Calu3 (cell line): ENCODE measurements at regions of chr6 and their contacts with region 1.

Region 1: DNA sequence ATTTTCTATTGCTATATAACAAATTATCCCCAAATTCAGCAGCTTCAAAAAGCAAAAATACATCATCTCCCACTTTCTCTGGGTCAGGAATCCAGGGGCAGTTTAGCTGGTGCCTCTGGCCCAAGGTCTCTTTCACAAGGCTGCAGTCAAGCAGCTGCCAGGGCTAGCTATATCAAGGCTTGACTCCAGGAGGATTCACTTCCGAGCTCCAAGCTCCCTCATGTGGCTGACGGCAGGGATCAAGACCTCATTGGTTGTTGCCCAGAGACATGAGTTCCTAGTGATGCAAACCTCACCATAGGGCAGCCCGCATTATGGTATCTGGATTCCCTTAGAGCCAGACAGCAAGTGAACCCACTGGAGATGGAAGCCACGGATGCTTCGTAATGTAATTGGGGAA is 1.3 kb upstream of the VNN1 start:
- DNase-seq: peak; percentile 75
- H3K4me3 Mint-ChIP-seq: no peak overlapping the region
- H3K27ac Mint-ChIP-seq: peak overlapping the region; percentile 61
- H3K4me1 Mint-ChIP-seq: peaks cover 68% of the 10 kb centered on the region
- H3K27me3 Mint-ChIP-seq: no peaks in the 10 kb centered on the region
- CTCF ChIP-seq: peak; percentile 58

Region 2: DNA sequence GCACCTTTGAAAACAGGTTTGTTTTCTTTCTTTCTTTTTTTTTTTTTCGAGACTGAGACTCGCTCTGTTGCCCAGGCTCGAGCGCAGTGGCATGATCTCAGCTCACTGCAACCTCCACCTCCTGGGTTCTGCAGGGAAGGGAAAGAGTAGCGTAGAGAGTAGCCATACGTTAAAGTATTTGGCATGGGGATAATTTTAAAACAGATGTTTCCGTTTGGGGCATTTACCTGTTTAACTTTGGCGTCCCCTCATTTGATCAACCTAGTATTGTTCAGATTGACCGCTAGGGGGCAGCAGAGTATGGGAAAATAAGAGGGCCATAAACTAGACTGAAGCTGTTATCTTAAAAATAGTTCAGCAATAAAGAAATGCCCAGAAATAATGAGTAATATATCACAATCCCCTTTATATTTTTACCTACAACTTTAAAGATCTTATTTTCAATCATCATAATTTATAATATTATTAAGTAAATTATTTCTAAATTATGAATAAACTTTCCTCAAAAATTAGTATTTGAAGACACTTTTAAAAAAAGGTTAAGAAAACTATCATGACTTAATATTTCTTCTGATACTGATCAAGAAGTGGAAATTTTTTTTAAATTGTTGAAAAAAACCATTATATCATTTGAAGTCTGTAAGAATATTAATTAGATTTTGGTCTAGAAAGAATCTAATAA is 184.8 kb before region 1 on chr6:
- CTCF ChIA-PET with region 1: interaction called, 24 read pairs
- intact Hi-C with region 1: loop called (anchors 1 kb)
- DNase-seq: peak; percentile 76
- H3K4me3 Mint-ChIP-seq: peak overlapping the region; percentile 37
- H3K27ac Mint-ChIP-seq: peak overlapping the region; percentile 50
- H3K4me1 Mint-ChIP-seq: no peaks in the 10 kb centered on the region
- H3K27me3 Mint-ChIP-seq: no peaks in the 10 kb centered on the region
- CTCF ChIP-seq: peak; percentile 64

Region 3: DNA sequence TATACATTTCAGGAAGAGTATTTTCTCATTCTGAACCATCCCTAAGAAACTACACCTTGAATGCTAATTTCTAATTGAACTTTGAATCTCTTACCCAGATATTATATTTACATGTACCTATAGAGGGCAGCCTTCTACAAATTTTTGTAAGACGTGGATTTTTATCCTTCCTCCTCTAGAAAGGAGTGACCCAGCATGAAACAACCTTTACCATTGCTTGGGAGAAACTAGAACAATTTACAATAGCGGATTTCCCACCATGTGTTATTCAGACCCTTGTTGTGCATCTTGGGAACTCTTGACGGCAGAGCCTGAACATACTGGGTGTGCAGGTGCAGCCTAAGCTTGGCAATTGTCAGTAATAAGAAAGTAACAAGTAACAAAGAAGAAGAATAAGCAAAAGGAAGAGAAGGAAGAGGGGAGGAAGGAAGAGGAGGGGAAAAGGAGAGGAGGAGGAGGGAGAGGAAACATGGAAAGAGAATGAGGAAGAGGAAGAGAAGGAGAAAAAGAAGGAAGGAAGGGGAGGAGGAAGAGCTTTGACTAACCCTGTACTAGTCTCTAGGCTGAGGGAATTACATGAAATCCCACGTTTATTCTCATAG is 45.4 kb before region 1 on chr6:
- CTCF ChIA-PET with region 1: interaction called, 13 read pairs
- intact Hi-C with region 1: loop called (anchors 1 kb)
- DNase-seq: no peak
- H3K4me3 Mint-ChIP-seq: no peak overlapping the region
- H3K27ac Mint-ChIP-seq: peak overlapping the region; percentile 59
- H3K4me1 Mint-ChIP-seq: peaks cover 54% of the 10 kb centered on the region
- H3K27me3 Mint-ChIP-seq: no peaks in the 10 kb centered on the region
- CTCF ChIP-seq: peak; percentile 30

Region 4: GRCh38 chr6:132687306-132687705 is 27.9 kb before region 1 on chr6:
- CTCF ChIA-PET with region 1: interaction called, 10 read pairs
- intact Hi-C with region 1: loop called (anchors 2 kb)
- DNase-seq: peak; percentile 28
- H3K4me3 Mint-ChIP-seq: peak overlapping the region; percentile 53
- H3K27ac Mint-ChIP-seq: peak overlapping the region; percentile 96
- H3K4me1 Mint-ChIP-seq: peaks cover 53% of the 10 kb centered on the region
- H3K27me3 Mint-ChIP-seq: no peaks in the 10 kb centered on the region
- CTCF ChIP-seq: no peak

Region 5: GRCh38 chr6:132734694-132735635 is 19.8 kb after region 1 on chr6:
- CTCF ChIA-PET with region 1: interaction called, 4 read pairs
- intact Hi-C with region 1: loop called (anchors 2 kb)
- DNase-seq: peak; percentile 31
- H3K4me3 Mint-ChIP-seq: no peak overlapping the region
- H3K27ac Mint-ChIP-seq: peak overlapping the region; percentile 83
- H3K4me1 Mint-ChIP-seq: peaks cover 65% of the 10 kb centered on the region
- H3K27me3 Mint-ChIP-seq: no peaks in the 10 kb centered on the region
- CTCF ChIP-seq: no peak

Region 6: GRCh38 chr6:132768051-132768517 is 52.9 kb after region 1 on chr6:
- CTCF ChIA-PET with region 1: interaction called, 13 read pairs
- intact Hi-C with region 1: loop called (anchors 1 kb)
- DNase-seq: peak; percentile 68
- H3K4me3 Mint-ChIP-seq: peak overlapping the region; percentile 43
- H3K27ac Mint-ChIP-seq: peak overlapping the region; percentile 9
- H3K4me1 Mint-ChIP-seq: peaks cover 32% of the 10 kb centered on the region
- H3K27me3 Mint-ChIP-seq: no peaks in the 10 kb centered on the region
- CTCF ChIP-seq: peak; percentile 95